ENCODE measurements at regions of chr3 and their contacts with region 1.

Region 1: GRCh38 chr3:159828542-159828943 is 160.1 kb upstream of the IL12A start:
- DNase-seq: no peak

Region 2: GRCh38 chr3:159062734-159063410 is 765.7 kb before region 1 on chr3:
- intact Hi-C with region 1: no loop called
- DNase-seq: no peak

Region 3: GRCh38 chr3:159989973-159990846 is 161.7 kb after region 1 on chr3:
- intact Hi-C with region 1: loop called in 1 of 2 experiments (anchors 10 kb)
- DNase-seq: no peak